ENCODE measurements at regions of chr16 and their contacts with region 1.

Region 1: GRCh38 chr16:74480141-74481029 is 59.1 kb upstream of the CLEC18B start:
- DNase-seq: no peak
- H3K4me3 ChIP-seq: no peak overlapping the region
- H3K27ac ChIP-seq: peak overlapping the region in 3 of 4 donors; percentile 6 to 16 (median 14)
- H3K4me1 ChIP-seq: peaks cover 0 to 16% (median 12%) of the 10 kb centered on the region in 4 donors
- H3K27me3 ChIP-seq: no peaks in the 10 kb centered on the region
- CTCF ChIP-seq: no peak
- EP300 ChIP-seq: no peak
- POLR2A ChIP-seq: no peak

Region 2: DNA sequence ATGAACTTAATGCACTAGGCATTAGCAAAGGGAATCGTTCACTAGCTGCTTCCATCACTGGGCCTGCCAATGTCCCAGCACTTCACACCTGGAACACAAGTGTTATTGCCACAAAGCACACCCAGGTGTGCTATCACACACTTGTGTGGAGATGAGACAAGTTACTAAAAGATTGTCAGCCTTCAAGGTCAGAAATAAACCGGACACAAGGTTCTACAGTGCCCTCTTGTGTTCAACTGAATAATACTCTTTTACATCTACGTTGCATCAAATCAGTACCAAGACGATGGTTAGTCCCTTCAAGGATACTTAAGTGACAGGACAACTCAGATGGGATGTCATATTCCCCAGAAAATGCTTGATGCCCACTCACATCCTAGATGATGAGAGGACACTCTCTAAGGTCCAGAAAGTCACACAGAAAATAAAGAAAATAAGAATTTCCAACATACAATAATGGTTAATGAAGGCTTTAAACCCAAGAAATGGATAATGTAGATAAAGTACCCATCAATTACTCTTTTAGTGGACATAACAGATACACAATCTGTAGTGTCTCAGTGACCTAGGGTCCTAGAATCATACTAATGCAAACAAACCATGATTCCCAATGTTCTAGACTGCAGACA is 142.9 kb after region 1 on chr16:
- intact Hi-C with region 1: loop called (anchors 10 kb)
- DNase-seq: no peak
- H3K4me3 ChIP-seq: no peak overlapping the region
- H3K27ac ChIP-seq: no peak overlapping the region
- H3K4me1 ChIP-seq: peaks cover 7 to 13% (median 11%) of the 10 kb centered on the region in 4 donors
- H3K27me3 ChIP-seq: no peaks in the 10 kb centered on the region
- CTCF ChIP-seq: peak; percentile 53 to 63 (median 54)
- EP300 ChIP-seq: no peak
- POLR2A ChIP-seq: no peak

Measured in esophagus muscularis mucosa (tissue), 4 donors.